ENCODE measurements at regions of chr17 and their contacts with region 1.

Region 1: GRCh38 chr17:79707931-79708891 is 22.5 kb upstream of the ENPP7 start:
- DNase-seq: peak in 1 of 2 donors; percentile 91
- H3K4me3 ChIP-seq: no peak overlapping the region
- CTCF ChIP-seq: no peak
- POLR2A ChIP-seq: no peak

Region 2: GRCh38 chr17:77887464-77888241 is 1820.6 kb before region 1 on chr17:
- intact Hi-C with region 1: no loop called
- DNase-seq: peak; percentile 81 to 97
- H3K4me3 ChIP-seq: peak overlapping the region; percentile 24
- CTCF ChIP-seq: no peak
- POLR2A ChIP-seq: no peak

Region 3: GRCh38 chr17:79607940-79608623 is 100.1 kb before region 1 on chr17:
- intact Hi-C with region 1: loop called (anchors 10 kb)
- DNase-seq: no peak
- H3K4me3 ChIP-seq: no peak overlapping the region
- CTCF ChIP-seq: no peak
- POLR2A ChIP-seq: no peak